K562 (cell line): ENCODE measurements at regions of chr19 and their contacts with region 1.

Region 1: GRCh38 chr19:29988351-29988750 is 46.3 kb downstream of the URI1 start:
- DNase-seq: peak; percentile 49 to 83 (median 67)
- ATAC-seq: peak; percentile 100
- H3K4me3 ChIP-seq: no peak overlapping the region
- H3K27ac ChIP-seq: peak overlapping the region; percentile 34; the same call in 1 of the 3 replicates
- H3K4me1 ChIP-seq: peaks cover 2 to 3% of the 10 kb centered on the region in 2 experiments; a peak in 3 of 5 replicates
- H3K27me3 ChIP-seq: no peaks in the 10 kb centered on the region
- CTCF ChIP-seq: peak; percentile 50 to 62 (median 54); a peak in 5 of 6 replicates
- EP300 ChIP-seq: peak; percentile 42; the same call in 1 of the 2 replicates
- POLR2A ChIP-seq: no peak
- RAD21 ChIP-seq: peak in 1 of 2 experiments; percentile 68; a peak in 2 of 4 replicates

Region 2: DNA sequence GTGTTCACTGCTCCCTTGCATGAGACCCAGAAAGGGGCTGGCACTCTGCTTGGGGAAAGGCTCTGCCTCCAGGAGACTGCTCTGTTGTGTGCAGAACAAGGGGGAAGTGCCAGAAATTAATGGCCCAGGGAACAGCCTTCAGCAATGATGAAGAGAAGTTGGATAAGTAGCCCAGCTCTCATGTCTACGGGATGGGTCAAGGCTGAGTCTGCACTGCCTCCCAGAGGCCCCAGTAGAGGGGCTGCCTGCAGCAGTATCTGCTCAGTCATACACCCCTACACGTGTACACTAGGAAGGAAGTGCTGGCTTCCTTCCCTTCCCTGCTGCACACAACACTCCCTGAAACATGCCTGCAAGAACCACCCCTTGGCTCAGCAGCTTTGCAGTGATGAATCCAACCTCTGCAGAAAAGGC is 100.9 kb before region 1 on chr19:
- CTCF ChIA-PET with region 1: no interaction called
- POLR2A ChIA-PET with region 1: no interaction called
- in situ Hi-C with region 1: no loop called
- intact Hi-C with region 1: loop called (anchors 10 kb)
- DNase-seq: peak in 3 of 4 experiments; percentile 27 to 56 (median 54)
- ATAC-seq: peak; percentile 95
- H3K4me3 ChIP-seq: no peak overlapping the region
- H3K27ac ChIP-seq: no peak overlapping the region
- H3K4me1 ChIP-seq: peaks cover 0 to 10% of the 10 kb centered on the region in 2 experiments; a peak in 3 of 5 replicates
- H3K27me3 ChIP-seq: peaks cover 1 to 19% of the 10 kb centered on the region in 2 experiments; a peak in 3 of 5 replicates
- CTCF ChIP-seq: peak; percentile 41 to 61 (median 52); a peak in 5 of 6 replicates
- EP300 ChIP-seq: no peak
- POLR2A ChIP-seq: no peak
- RAD21 ChIP-seq: peak; percentile 67 to 71

Region 3: GRCh38 chr19:29978080-29978479 is 10.3 kb before region 1 on chr19:
- CTCF ChIA-PET with region 1: no interaction called
- POLR2A ChIA-PET with region 1: interaction called, 16 read pairs
- in situ Hi-C with region 1: no loop called
- intact Hi-C with region 1: no loop called
- DNase-seq: no peak
- ATAC-seq: peak; percentile 34; the same call in 1 of the 3 replicates
- H3K4me3 ChIP-seq: no peak overlapping the region
- H3K27ac ChIP-seq: no peak overlapping the region
- H3K4me1 ChIP-seq: no peaks in the 10 kb centered on the region; a peak in 2 of 5 replicates
- H3K27me3 ChIP-seq: no peaks in the 10 kb centered on the region
- CTCF ChIP-seq: no peak
- EP300 ChIP-seq: no peak
- POLR2A ChIP-seq: no peak
- RAD21 ChIP-seq: no peak